IMR-90 (cell line): ENCODE measurements at regions of chr12 and their contacts with region 1.

Region 1: DNA sequence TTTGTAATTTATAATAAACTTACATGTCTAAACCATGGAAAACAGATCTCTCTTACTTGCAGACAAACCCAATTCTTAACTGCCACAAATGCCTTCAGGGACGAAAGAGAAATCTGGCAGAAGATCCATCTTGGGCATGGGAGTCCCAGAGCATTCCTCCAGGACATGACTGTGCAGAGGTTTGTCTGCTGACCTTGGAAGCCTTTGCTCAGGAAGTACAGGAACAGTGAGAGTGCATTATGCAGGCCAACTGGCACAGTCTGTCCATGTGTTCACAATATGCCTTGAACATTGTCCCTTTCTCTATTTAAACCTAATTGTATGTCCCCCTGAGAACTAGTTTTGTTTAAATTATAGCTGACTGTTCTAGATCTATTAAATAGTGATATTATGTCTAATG is 467.1 kb downstream of the ATP23 start:
- DNase-seq: peak; percentile 31
- ATAC-seq: peak; percentile 48; the same call in 1 of the 2 replicates
- H3K4me3 ChIP-seq: no peak overlapping the region
- H3K27ac ChIP-seq: no peak overlapping the region
- H3K4me1 ChIP-seq: peaks cover 3% of the 10 kb centered on the region; the same call in 1 of the 2 replicates
- H3K27me3 ChIP-seq: no peaks in the 10 kb centered on the region
- CTCF ChIP-seq: no peak
- POLR2A ChIP-seq: no peak
- RAD21 ChIP-seq: no peak

Region 2: DNA sequence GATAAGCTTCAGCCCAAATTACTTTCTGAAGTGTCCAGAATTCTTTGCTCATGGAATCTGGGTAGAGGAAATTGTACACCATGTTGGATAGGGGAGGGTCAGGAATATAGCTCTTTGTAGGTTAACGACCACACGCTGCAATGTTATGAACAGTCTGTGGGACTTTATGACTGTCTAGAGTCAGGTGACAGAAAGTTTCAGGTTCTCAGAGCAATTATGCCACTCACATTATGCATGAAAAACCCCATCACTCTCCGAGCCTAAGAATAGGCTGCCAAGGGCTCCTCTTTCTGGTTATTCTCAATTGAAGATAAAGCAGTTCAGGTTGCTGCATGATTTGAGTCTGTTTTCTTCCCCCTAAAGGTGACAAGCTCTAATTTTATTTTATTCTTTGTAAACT is 36.2 kb before region 1 on chr12:
- CTCF ChIA-PET with region 1: no interaction called
- POLR2A ChIA-PET with region 1: no interaction called
- dilution Hi-C with region 1: no loop called
- in situ Hi-C with region 1: no loop called
- intact Hi-C with region 1: loop called (anchors 5 kb)
- DNase-seq: no peak
- ATAC-seq: no peak
- H3K4me3 ChIP-seq: no peak overlapping the region
- H3K27ac ChIP-seq: no peak overlapping the region
- H3K4me1 ChIP-seq: peaks cover 6% of the 10 kb centered on the region; the same call in 1 of the 2 replicates
- H3K27me3 ChIP-seq: no peaks in the 10 kb centered on the region
- CTCF ChIP-seq: no peak
- POLR2A ChIP-seq: no peak
- RAD21 ChIP-seq: no peak